Left cardiac atrium (tissue), 4 donors: ENCODE measurements at regions of chr19 and their contacts with region 1.

Region 1: GRCh38 chr19:58278157-58279041 is at the start of gene ZNF8:
- DNase-seq: peak; percentile 98
- ATAC-seq: peak; percentile 95 to 96
- total RNA-seq, gene ZNF8: 4.4 to 6.8 TPM

Region 2: GRCh38 chr19:58182989-58183816 is 95.2 kb before region 1 on chr19 and contains the start of gene ZNF274:
- intact Hi-C with region 1: loop called in 1 of 2 experiments (anchors 2 kb)
- DNase-seq: peak; percentile 95
- ATAC-seq: peak; percentile 97
- total RNA-seq, gene ZNF274: 20.9 to 28.3 TPM

Region 3: DNA sequence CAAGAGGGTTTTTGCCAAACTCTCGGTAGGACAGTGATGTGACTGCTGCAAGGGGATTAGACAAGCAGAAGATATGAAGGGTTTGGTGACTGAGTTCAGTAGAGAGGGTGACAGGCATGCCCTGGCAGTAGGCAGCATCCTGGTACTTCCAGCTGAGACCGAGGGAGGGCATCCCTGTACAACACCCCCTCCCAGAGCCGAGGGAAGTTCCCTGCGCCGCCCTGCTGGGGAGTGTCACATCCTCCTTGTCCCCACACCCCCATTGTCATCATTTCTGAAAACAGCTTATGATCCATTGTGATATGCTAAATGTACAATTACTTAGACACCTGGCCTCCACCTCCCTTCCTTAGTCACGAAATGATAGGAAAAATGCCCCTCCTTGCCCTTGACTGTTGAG is 35.0 kb before region 1 on chr19:
- intact Hi-C with region 1: no loop called
- DNase-seq: no peak
- ATAC-seq: no peak